Ovary (tissue), 10 donors: ENCODE measurements at regions of chr1 and their contacts with region 1.

Region 1: DNA sequence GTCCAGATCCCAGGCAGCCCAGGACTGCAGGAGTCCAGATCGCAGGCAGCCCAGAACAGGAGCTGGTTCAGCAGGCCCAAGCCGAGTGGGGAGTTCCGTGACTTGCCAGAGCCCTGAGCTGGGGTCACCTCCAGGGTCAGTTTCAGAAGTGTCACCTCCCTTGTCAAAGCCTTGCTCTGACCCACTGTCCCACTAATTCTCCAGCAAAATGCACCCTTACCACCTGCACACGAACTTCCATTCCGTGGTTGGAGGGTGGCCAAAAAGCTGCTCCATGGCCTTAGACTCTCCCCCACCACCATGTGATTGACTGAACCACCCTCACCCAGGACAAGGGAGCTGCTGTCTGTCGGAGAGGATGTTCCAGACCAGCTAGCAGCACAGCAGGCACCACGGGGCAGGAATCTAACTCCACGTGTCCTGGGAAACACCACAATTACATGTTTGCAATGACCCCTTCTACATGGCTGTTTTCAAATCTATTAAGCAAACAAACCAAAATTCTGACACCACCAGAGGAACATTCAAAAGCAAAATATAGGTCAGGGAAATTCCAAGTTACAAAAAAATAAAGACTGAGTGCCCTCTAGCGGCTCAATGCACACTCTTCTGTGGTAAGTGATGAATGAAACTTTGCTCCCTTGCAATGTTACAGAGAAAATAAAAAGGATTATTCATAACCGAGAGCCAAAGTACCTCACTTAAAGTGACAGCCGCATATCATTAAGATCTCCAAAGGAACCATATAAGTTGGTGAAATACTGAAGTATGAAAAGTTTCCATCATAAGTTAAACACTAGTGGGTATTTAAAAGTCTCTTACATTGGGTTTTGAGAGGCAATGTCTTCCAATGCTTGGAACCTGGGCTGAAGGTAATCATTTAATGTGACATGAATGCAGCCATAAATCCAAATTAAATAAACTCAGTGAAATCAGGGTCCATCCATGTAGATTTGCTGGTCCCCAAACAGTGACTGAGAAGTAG is 76.3 kb downstream of the NPHP4 start:
- DNase-seq: peak; percentile 43 to 69 (median 56)
- H3K4me3 ChIP-seq: no peak overlapping the region
- H3K27ac ChIP-seq: peak overlapping the region in 1 of 2 donors; percentile 53
- H3K4me1 ChIP-seq: peaks cover 7% of the 10 kb centered on the region
- H3K27me3 ChIP-seq: no peaks in the 10 kb centered on the region
- CTCF ChIP-seq: peak; percentile 61 to 71 (median 66)
- EP300 ChIP-seq: no peak
- POLR2A ChIP-seq: no peak

Region 2: DNA sequence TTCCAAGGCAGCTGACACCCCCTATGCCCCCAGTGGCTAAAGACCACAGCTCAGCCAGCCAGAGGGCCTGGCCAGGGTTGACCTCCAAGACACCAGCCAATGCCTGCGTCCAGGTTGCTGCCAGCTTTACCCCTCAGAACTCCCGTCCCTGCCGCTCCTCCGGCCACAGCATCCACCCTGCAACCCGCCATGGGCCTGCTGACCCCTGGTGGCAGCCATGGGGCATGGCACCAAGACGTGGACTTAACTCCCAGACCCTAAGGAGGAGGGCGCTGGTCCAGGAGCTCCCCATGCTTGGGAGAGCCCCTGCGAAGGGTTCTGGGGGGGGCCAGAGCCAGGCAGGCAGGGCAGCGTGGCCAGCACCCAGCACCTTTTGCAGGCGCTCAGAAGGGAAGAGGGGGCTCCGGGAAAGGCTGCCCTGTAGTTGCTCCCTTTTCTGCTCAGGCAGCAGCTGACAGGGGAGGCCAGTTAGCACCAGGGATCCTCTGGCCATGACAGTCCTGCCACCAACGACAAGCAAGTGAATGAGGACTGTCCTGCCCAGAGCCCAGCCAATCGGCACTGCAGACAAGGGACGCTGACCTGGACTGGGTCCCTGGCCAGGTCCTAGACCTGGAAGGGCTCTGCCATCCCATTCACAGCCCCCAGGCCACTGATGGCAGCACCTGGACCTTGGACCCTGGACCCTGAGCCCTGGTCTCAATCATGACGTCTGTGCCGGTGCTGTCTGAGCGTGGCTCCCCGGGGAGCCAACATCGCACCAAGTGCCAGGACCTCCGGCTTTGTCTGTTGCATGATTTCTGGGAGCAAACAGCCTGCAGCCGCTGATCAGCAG is 169.9 kb before region 1 on chr1:
- intact Hi-C with region 1: no loop called
- DNase-seq: peak; percentile 59 to 81 (median 69)
- H3K4me3 ChIP-seq: no peak overlapping the region
- H3K27ac ChIP-seq: no peak overlapping the region
- H3K4me1 ChIP-seq: no peaks in the 10 kb centered on the region
- H3K27me3 ChIP-seq: no peaks in the 10 kb centered on the region
- CTCF ChIP-seq: peak; percentile 61 to 78 (median 62)
- EP300 ChIP-seq: no peak
- POLR2A ChIP-seq: no peak

Region 3: DNA sequence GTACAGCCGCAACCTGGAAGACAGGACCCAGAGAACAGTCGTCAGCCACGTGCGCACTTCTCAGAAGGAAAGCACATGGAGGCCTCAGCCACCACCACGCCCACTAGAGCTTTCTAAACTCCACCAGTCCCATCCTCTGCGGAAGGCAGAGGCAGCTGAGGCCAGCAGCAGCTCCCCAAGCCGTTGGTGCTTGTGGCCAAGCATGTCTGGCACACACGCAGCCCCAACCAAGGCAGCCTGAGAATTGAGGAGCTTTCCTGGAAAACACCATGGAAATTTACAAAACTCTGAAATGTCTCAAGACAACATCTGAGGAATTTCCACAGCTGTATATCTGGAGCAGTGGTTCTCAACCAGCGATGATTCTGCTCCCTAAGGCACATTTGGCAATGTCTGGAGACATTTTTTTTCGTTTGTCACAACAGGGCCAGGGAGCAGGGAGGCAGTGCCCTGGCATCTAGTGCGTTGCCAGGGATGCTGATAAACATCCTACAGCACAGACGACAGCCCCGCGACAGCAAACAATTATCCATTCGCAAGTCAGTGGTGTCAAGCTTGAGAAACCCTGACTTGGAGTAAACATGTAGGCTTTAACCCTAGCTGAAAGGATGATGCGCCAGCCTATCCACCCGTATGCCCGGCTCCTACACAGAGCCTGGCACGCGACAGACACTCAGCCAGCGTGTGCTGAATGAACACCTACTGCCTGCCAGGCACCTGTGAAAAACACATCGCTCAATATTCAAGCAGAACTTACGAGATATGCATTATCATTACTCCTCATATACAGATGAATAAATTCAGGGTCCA is 51.7 kb after region 1 on chr1:
- intact Hi-C with region 1: loop called in 1 of 4 experiments (anchors 5 kb)
- DNase-seq: peak; percentile 71 to 87 (median 76)
- H3K4me3 ChIP-seq: no peak overlapping the region
- H3K27ac ChIP-seq: peak overlapping the region in 1 of 2 donors; percentile 79
- H3K4me1 ChIP-seq: peaks cover 9% of the 10 kb centered on the region
- H3K27me3 ChIP-seq: no peaks in the 10 kb centered on the region
- CTCF ChIP-seq: no peak
- EP300 ChIP-seq: no peak
- POLR2A ChIP-seq: no peak

Region 4: GRCh38 chr1:5980314-5981008 is 64.6 kb after region 1 on chr1:
- intact Hi-C with region 1: no loop called
- DNase-seq: peak in 1 of 5 donors; percentile 19
- H3K4me3 ChIP-seq: no peak overlapping the region
- H3K27ac ChIP-seq: no peak overlapping the region
- H3K4me1 ChIP-seq: no peaks in the 10 kb centered on the region
- H3K27me3 ChIP-seq: no peaks in the 10 kb centered on the region
- CTCF ChIP-seq: no peak
- EP300 ChIP-seq: no peak
- POLR2A ChIP-seq: no peak